Head of caudate nucleus (tissue), 42 donors: ENCODE measurements at regions of chr10 and their contacts with region 1.

Region 1: DNA sequence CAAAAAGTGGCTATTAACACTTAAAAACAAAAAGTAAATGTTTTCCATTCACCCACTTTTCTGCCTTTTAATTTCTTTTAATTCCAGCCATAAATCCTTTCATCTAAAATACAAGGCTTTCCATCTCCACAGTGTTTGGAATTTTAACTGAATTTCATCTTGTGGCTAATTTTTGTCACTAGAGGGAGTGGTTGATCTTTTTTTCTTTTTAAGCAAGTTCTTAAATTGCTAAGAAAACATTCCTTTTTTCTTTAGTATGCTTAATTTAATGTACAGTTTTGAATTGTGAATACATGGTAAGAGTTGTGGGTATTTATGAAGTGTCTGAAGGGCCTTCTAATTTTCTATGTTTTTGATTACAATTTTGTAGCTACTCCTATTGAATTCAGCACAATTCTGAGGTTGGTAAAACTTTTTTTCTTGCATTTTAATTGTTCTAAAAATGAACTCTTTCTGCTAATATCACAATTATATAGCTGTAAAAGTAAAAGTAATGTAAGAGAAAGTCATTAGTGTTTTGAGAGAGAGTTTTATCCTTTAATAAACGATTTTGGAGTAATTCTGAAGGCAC is 54.9 kb upstream of the ANK3 start:
- DNase-seq: no peak

Region 2: GRCh38 chr10:60099998-60100747 is 344.4 kb before region 1 on chr10:
- intact Hi-C with region 1: loop called (anchors 5 kb)
- DNase-seq: peak in 15 of 42 donors; percentile 19 to 70 (median 28)

Region 3: GRCh38 chr10:60186315-60187071 is 258.1 kb before region 1 on chr10:
- intact Hi-C with region 1: no loop called
- DNase-seq: peak in 16 of 42 donors; percentile 18 to 73 (median 34)

Region 4: GRCh38 chr10:60480865-60481563 is 36.4 kb after region 1 on chr10:
- intact Hi-C with region 1: no loop called
- DNase-seq: peak in 29 of 42 donors; percentile 23 to 87 (median 58)

Region 5: GRCh38 chr10:60564475-60564874 is 119.9 kb after region 1 on chr10:
- intact Hi-C with region 1: loop called (anchors 10 kb)
- DNase-seq: no peak

Region 6: DNA sequence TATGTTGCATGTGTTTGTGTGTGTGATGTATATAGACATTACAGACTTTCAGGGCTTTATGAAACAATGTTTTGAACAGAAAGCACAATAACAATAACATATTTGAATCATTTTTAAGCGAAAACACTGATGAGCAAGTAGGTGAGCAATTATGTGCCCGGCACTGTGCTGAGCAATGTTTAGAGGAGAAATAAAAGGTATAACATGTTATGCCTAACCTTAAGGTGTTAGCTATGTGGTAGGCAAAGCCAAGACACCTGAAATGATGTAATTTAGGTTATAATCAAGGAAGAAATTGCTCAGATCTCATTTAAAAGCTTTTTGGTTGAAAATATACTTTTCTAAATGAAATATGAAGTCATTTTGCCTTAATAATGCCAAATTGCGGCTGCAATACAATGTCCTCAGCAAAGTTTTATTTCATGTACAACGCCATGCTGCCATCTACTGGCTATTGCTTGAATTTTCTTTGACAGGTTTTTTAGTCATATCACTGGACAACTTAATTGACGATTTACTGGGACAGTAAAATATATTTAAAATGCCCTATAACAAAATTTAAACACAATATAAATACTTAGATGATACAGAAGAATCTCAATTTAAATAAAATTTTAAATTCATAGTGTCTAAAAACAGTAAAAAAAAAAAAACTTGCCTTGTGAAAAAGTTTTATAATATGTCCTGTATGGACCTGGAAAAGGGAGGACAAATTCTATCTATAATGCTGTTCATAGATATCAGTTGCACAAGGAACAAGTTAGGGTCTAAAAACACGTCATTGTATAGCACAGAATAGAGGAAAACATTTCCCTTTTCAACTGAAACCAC is 202.6 kb after region 1 on chr10:
- intact Hi-C with region 1: loop called (anchors 10 kb)
- DNase-seq: peak in 25 of 42 donors; percentile 19 to 85 (median 57)

Region 7: DNA sequence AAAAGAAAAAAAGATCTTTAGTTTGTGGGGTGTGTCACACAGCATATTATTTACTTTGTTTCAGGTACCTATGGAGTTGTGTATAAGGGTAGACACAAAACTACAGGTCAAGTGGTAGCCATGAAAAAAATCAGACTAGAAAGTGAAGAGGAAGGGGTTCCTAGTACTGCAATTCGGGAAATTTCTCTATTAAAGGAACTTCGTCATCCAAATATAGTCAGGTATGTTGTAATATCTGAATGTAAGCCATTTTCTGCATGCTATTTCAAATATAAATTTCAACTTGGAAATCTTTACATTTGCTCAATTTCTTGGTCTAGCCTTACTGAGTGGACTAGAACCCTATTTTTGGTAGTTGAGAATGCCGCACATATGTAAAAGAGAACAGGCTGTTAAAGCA is 340.1 kb after region 1 on chr10:
- intact Hi-C with region 1: no loop called
- DNase-seq: no peak